A673 (cell line): ENCODE measurements at regions of chr18 and their contacts with region 1.

Region 1: DNA sequence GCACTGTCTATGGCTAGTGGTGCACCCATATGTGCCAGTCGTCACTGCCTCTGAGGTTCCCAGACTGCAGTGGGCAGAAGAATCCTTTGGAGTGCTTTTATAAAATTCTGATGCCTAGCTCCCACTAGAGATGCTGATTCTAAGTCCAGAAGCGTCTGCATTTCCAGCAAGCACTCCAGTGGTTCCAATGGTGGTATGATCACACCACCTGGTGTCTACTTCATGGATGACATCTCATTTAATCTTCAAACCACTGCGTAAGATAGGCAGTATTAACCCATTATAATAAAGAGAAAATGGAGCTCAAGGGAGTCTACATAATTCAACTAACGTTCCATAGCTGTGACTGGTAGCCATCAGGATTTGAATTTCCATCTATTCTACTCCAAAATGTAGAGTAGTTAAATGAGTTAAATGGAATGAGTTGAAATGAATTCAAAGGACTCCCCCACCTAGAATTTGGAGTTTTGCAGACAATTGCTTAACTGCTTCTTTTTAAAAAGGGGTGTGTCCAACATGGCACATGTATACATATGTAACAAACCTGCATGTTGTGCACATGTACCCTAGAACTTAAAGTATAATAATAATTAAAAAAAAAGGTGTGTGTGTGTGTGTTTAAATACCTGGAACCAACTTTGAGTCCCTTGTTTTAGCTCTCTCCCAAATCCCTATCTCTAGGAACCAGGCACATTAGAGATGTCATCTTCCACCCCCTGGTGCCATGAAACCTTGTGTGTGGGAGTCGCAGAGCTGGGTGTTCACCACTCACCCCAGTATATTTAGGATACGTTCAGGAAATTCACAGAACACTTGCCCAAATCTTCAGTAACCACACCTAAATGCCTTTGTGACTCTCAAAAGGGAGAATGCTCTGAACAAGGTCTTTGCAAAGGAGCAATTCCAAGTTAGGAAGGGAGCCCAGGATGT is 14.1 kb downstream of the LAMA3 start:
- DNase-seq: peak; percentile 84
- H3K4me3 ChIP-seq: no peak overlapping the region
- H3K27ac ChIP-seq: no peak overlapping the region
- H3K4me1 ChIP-seq: no peaks in the 10 kb centered on the region
- H3K27me3 ChIP-seq: no peaks in the 10 kb centered on the region
- CTCF ChIP-seq: peak; percentile 66

Region 2: GRCh38 chr18:23503038-23503962 is 200.0 kb before region 1 on chr18 and contains the start of gene RMC1:
- CTCF ChIA-PET with region 1: interaction called, 13 read pairs
- POLR2A ChIA-PET with region 1: no interaction called
- intact Hi-C with region 1: loop called (anchors 5 kb)
- DNase-seq: peak; percentile 95
- H3K4me3 ChIP-seq: peak within 1 kb of the TSS; percentile 76
- H3K27ac ChIP-seq: peak within 1 kb of the TSS; percentile 87
- H3K4me1 ChIP-seq: peaks cover 10% of the 10 kb centered on the region
- H3K27me3 ChIP-seq: no peaks in the 10 kb centered on the region
- CTCF ChIP-seq: 0 out of 2 replicates have a peak, but pooled peaks have one; percentile 18
- total RNA-seq, gene RMC1: 38.1 and 39.8 TPM in 2 replicates

Region 3: DNA sequence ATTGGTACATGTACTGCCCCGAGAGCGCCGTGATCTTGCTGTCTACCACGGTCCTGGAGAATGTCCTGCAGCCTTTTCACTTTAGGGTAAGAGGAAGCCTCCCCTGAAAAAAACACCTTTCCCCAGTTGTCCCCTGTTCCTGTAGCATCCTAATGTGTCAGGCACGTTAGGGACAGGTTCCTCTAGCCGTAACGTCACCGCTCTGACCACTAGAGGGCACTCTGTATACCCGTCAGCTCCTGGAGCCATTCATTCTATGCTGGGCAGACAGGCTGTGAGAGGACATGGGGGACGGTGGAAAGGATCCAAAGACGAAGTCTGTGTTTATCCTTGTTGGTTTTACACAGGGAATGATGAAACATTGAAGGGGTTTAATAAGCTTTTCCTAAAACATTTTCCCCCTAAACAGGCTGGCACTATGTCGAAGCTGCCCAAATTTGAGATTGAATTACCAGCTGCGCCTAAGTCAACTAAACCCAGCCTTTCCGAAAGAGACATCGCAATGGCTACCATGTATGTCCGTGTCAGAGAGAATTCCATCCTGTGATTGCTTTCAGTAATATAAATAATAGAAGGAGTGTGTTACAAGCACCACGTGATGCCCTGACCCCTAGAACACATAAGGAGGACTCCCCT is 187.3 kb before region 1 on chr18:
- CTCF ChIA-PET with region 1: interaction called, 8 read pairs
- POLR2A ChIA-PET with region 1: no interaction called
- intact Hi-C with region 1: loop called (anchors 1 kb)
- DNase-seq: peak; percentile 86
- H3K4me3 ChIP-seq: no peak overlapping the region
- H3K27ac ChIP-seq: no peak overlapping the region
- H3K4me1 ChIP-seq: no peaks in the 10 kb centered on the region
- H3K27me3 ChIP-seq: no peaks in the 10 kb centered on the region
- CTCF ChIP-seq: peak; percentile 94

Region 4: GRCh38 chr18:23619388-23619881 is 83.9 kb before region 1 on chr18:
- CTCF ChIA-PET with region 1: interaction called, 31 read pairs
- POLR2A ChIA-PET with region 1: no interaction called
- intact Hi-C with region 1: loop called (anchors 1 kb)
- DNase-seq: no peak
- H3K4me3 ChIP-seq: peak overlapping the region; percentile 42
- H3K27ac ChIP-seq: no peak overlapping the region
- H3K4me1 ChIP-seq: no peaks in the 10 kb centered on the region
- H3K27me3 ChIP-seq: peaks cover 17% of the 10 kb centered on the region
- CTCF ChIP-seq: no peak

Region 5: DNA sequence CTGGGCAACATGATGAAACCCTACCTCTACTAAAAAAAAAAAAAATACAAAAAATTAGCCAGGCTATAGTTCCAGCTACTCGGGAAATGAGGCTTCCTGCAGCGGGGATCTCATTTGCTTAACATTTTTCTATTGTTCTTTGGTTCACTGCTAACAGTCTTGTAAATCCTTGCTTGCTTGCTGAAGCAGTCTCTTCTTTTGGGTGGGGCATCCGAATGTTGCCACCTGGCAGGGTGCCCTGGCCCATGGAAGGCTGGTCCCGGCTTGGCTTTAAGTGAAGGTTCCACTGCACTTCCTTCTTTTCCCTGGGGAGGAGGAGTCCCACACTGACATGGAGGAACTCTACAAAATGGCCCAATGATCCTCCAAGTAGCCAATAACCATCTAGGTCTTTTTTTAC is 34.6 kb before region 1 on chr18:
- CTCF ChIA-PET with region 1: interaction called, 13 read pairs
- POLR2A ChIA-PET with region 1: no interaction called
- intact Hi-C with region 1: no loop called
- DNase-seq: peak; percentile 79
- H3K4me3 ChIP-seq: no peak overlapping the region
- H3K27ac ChIP-seq: peak overlapping the region; percentile 43
- H3K4me1 ChIP-seq: peaks cover 41% of the 10 kb centered on the region
- H3K27me3 ChIP-seq: no peaks in the 10 kb centered on the region
- CTCF ChIP-seq: no peak

Region 6: DNA sequence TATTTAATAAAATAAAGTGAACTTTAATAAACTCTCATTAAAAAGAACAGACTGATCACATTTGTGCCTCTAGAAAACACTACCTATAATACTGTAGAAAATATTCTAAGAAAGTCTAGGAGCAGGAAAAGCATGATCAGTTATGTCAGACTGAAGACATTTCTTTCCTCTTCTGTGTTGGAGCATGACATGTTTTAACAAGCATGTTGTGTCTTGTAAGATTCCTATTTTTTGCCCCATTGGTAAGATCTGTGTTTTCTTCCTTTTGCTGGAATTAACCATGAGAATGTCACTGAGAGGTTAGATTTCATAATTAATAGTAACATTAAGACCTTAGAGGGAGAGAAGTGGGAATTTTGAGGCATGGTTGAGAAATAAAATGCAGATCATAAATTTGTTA is 13.6 kb after region 1 on chr18:
- CTCF ChIA-PET with region 1: interaction called, 15 read pairs
- POLR2A ChIA-PET with region 1: no interaction called
- intact Hi-C with region 1: no loop called
- DNase-seq: no peak
- H3K4me3 ChIP-seq: no peak overlapping the region
- H3K27ac ChIP-seq: no peak overlapping the region
- H3K4me1 ChIP-seq: peaks cover 9% of the 10 kb centered on the region
- H3K27me3 ChIP-seq: no peaks in the 10 kb centered on the region
- CTCF ChIP-seq: no peak

Region 7: DNA sequence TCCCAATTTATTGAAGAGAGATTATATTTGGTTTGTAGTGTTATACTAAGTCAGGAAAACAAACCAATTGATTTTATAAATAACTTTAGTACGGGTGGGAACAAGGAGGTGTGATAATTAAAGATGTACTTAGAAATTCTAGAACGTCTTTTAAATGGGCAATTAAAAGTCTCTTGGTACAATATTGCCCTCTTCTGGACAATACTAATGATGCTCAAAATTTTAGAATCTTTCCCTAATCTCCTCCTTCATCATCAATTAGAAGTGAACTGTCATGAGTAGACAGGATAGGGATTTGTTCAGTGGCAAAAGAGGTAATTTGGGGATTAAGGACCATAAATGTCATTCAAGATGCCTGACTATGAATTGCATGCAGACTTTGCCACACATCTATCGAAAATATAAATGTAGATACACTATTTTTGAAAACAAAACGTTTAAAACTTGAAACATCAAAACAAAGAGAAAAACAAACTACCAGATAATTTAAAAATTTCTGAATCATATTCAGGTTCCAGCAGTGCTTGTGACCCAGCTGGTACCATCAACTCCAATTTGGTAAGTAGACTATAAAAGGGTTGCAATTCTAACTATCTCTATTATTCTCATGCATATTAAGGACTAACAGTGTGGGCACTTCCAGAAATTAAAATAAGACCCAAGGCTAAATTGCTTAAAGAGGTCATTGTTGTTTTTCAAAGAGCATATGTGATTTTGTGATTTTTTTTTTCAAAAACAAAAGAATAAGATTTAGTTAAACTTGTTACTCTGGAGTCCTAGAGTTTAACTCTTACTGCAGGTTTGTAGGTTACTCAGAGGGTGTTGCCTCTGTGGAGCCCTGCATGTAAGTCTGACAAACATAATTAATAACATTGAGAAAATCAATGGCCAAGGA is 109.5 kb after region 1 on chr18:
- CTCF ChIA-PET with region 1: interaction called, 3 read pairs
- POLR2A ChIA-PET with region 1: no interaction called
- intact Hi-C with region 1: loop called (anchors 5 kb)
- DNase-seq: peak; percentile 66
- H3K4me3 ChIP-seq: no peak overlapping the region
- H3K27ac ChIP-seq: no peak overlapping the region
- H3K4me1 ChIP-seq: no peaks in the 10 kb centered on the region
- H3K27me3 ChIP-seq: no peaks in the 10 kb centered on the region
- CTCF ChIP-seq: peak; percentile 65